GM12878 (cell line): ENCODE measurements at regions of chr18 and their contacts with region 1.

Region 1: GRCh38 chr18:5237723-5238370 is 40.8 kb upstream of the AKAIN1 start:
- DNase-seq: peak; percentile 51
- ATAC-seq: peak; percentile 97
- H3K4me3 ChIP-seq: peak overlapping the region; percentile 95
- H3K27ac ChIP-seq: peak overlapping the region; percentile 98
- H3K4me1 ChIP-seq: peaks cover 5% of the 10 kb centered on the region
- H3K27me3 ChIP-seq: no peaks in the 10 kb centered on the region
- CTCF ChIP-seq: peak; percentile 10 to 31 (median 12); a peak in 1 of 6 replicates
- EP300 ChIP-seq: no peak
- POLR2A ChIP-seq: peak; percentile 97
- RAD21 ChIP-seq: no peak

Region 2: GRCh38 chr18:3836483-3837335 is 1401.1 kb before region 1 on chr18:
- CTCF ChIA-PET with region 1: no interaction called
- POLR2A ChIA-PET with region 1: no interaction called
- RAD21 ChIA-PET with region 1: no interaction called
- SMC1A ChIA-PET with region 1: no interaction called
- in situ Hi-C with region 1: no loop called
- intact Hi-C with region 1: no loop called
- DNase-seq: no peak
- ATAC-seq: no peak; the same call in 2 of the 3 replicates
- H3K4me3 ChIP-seq: no peak overlapping the region
- H3K27ac ChIP-seq: no peak overlapping the region
- H3K4me1 ChIP-seq: no peaks in the 10 kb centered on the region
- H3K27me3 ChIP-seq: no peaks in the 10 kb centered on the region
- CTCF ChIP-seq: no peak
- EP300 ChIP-seq: no peak
- POLR2A ChIP-seq: no peak
- RAD21 ChIP-seq: no peak

Region 3: DNA sequence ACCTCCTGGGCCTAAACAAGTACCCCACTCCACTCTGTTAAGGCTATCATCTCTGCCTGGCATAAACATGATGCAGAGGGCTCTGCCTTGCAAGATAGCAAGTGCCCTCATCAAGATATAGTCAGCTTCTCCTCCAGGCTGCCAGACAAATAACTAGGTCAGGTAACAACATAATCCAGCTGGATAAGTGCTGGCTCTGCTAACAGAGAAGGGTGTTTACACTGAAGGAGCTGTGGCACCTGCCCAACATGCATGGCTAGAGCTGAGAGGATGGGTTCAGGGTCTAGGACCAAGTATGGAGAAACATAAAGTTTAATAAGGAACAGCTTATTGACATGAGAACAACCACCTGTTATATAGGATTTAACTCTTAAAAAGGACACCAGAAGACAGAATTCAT is 825.6 kb before region 1 on chr18:
- CTCF ChIA-PET with region 1: no interaction called
- POLR2A ChIA-PET with region 1: no interaction called
- RAD21 ChIA-PET with region 1: no interaction called
- SMC1A ChIA-PET with region 1: no interaction called
- in situ Hi-C with region 1: no loop called
- intact Hi-C with region 1: no loop called
- DNase-seq: no peak
- ATAC-seq: peak; percentile 21
- H3K4me3 ChIP-seq: no peak overlapping the region
- H3K27ac ChIP-seq: no peak overlapping the region
- H3K4me1 ChIP-seq: no peaks in the 10 kb centered on the region
- H3K27me3 ChIP-seq: no peaks in the 10 kb centered on the region
- CTCF ChIP-seq: no peak
- EP300 ChIP-seq: no peak
- POLR2A ChIP-seq: no peak
- RAD21 ChIP-seq: no peak

Region 4: DNA sequence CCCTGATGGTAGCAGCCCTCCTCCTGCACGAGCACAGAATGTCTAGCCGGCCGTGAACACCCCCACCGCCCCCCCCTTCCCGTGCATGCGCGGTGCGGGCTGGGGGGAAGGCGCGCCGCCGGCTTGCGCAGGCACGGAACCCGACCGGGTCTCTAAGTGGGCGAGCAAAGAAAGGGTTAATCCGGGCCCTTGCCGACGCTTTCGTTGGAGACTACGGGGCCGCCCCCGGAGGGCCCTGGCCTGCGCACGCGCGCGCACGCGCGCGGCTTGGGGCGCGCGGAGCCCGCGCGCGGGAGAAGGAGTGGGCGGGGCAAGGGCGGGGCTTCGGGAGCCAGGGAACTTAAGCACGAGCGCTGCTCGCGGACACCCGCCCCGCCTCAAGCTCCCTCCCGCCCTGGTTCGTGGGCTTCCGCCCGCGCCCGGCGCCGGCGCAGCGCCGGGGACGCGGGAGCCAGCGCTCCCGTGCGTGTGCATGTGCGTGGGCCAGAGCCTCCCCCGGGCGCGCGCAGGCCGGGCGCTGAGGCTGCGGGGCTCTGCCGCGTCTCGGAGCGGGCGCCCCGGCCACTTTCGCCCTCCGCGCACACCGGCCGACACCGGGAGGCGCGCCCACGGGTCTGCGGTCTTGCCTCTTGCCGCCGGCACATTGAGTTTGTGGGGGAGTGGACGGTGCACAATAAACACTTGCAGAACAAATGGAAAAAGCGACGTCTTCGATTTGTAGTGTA is 58.3 kb after region 1 on chr18:
- CTCF ChIA-PET with region 1: interaction called, 9 read pairs
- POLR2A ChIA-PET with region 1: interaction called, 51 read pairs
- RAD21 ChIA-PET with region 1: interaction called, 33 read pairs
- SMC1A ChIA-PET with region 1: interaction called, 6 read pairs
- in situ Hi-C with region 1: loop called (anchors 5 kb)
- intact Hi-C with region 1: loop called (anchors 1 kb)
- DNase-seq: peak; percentile 62
- ATAC-seq: peak; percentile 83
- H3K4me3 ChIP-seq: peak overlapping the region; percentile 80
- H3K27ac ChIP-seq: peak overlapping the region; percentile 84
- H3K4me1 ChIP-seq: peaks cover 5% of the 10 kb centered on the region; the same call in 1 of the 2 replicates
- H3K27me3 ChIP-seq: peaks cover 0 to 1% of the 10 kb centered on the region in 2 experiments; a peak in 2 of 4 replicates
- CTCF ChIP-seq: no peak
- EP300 ChIP-seq: no peak
- POLR2A ChIP-seq: peak; percentile 79
- RAD21 ChIP-seq: no peak

Region 5: GRCh38 chr18:5317186-5317585 is 79.3 kb after region 1 on chr18:
- CTCF ChIA-PET with region 1: no interaction called
- POLR2A ChIA-PET with region 1: no interaction called
- RAD21 ChIA-PET with region 1: no interaction called
- SMC1A ChIA-PET with region 1: no interaction called
- in situ Hi-C with region 1: no loop called
- intact Hi-C with region 1: no loop called
- DNase-seq: no peak
- ATAC-seq: no peak
- H3K4me3 ChIP-seq: no peak overlapping the region
- H3K27ac ChIP-seq: no peak overlapping the region
- H3K4me1 ChIP-seq: no peaks in the 10 kb centered on the region
- H3K27me3 ChIP-seq: no peaks in the 10 kb centered on the region
- CTCF ChIP-seq: no peak
- EP300 ChIP-seq: no peak
- POLR2A ChIP-seq: no peak
- RAD21 ChIP-seq: no peak

Region 6: GRCh38 chr18:5600378-5601071 is 362.7 kb after region 1 on chr18:
- CTCF ChIA-PET with region 1: no interaction called
- POLR2A ChIA-PET with region 1: no interaction called
- RAD21 ChIA-PET with region 1: no interaction called
- SMC1A ChIA-PET with region 1: no interaction called
- in situ Hi-C with region 1: no loop called
- intact Hi-C with region 1: no loop called
- DNase-seq: no peak
- ATAC-seq: no peak
- H3K4me3 ChIP-seq: no peak overlapping the region
- H3K27ac ChIP-seq: no peak overlapping the region
- H3K4me1 ChIP-seq: no peaks in the 10 kb centered on the region
- H3K27me3 ChIP-seq: no peaks in the 10 kb centered on the region; a peak in 1 of 4 replicates
- CTCF ChIP-seq: no peak; a peak in 1 of 6 replicates
- EP300 ChIP-seq: no peak
- POLR2A ChIP-seq: no peak
- RAD21 ChIP-seq: peak; percentile 43